Activated CD4-positive, alpha-beta T cell treated with anti-CD3 and anti-CD28 coated beads, Interleukin-2, amount 10 ng/mL, durations not matched to agents 24 days and 14 days (primary cell): ENCODE measurements at regions of chr7 and their contacts with region 1.

Region 1: GRCh38 chr7:24665564-24666294 is 91.5 kb downstream of the GSDME start:
- DNase-seq: peak; percentile 86
- H3K4me3 Mint-ChIP-seq: no peak overlapping the region
- H3K27ac Mint-ChIP-seq: no peak overlapping the region
- H3K4me1 Mint-ChIP-seq: peaks cover 1% of the 10 kb centered on the region
- H3K27me3 Mint-ChIP-seq: no peaks in the 10 kb centered on the region

Region 2: GRCh38 chr7:23570592-23571200 is 1095.0 kb before region 1 on chr7:
- intact Hi-C with region 1: loop called (anchors 2 kb)
- DNase-seq: peak; percentile 90
- H3K4me3 Mint-ChIP-seq: no peak overlapping the region
- H3K27ac Mint-ChIP-seq: no peak overlapping the region
- H3K4me1 Mint-ChIP-seq: no peaks in the 10 kb centered on the region
- H3K27me3 Mint-ChIP-seq: peaks cover 8% of the 10 kb centered on the region

Region 3: GRCh38 chr7:24290004-24290641 is 375.6 kb before region 1 on chr7:
- intact Hi-C with region 1: loop called (anchors 1 kb)
- DNase-seq: peak; percentile 82
- H3K4me3 Mint-ChIP-seq: no peak overlapping the region
- H3K27ac Mint-ChIP-seq: no peak overlapping the region
- H3K4me1 Mint-ChIP-seq: peaks cover 6% of the 10 kb centered on the region
- H3K27me3 Mint-ChIP-seq: peaks cover 42% of the 10 kb centered on the region

Region 4: DNA sequence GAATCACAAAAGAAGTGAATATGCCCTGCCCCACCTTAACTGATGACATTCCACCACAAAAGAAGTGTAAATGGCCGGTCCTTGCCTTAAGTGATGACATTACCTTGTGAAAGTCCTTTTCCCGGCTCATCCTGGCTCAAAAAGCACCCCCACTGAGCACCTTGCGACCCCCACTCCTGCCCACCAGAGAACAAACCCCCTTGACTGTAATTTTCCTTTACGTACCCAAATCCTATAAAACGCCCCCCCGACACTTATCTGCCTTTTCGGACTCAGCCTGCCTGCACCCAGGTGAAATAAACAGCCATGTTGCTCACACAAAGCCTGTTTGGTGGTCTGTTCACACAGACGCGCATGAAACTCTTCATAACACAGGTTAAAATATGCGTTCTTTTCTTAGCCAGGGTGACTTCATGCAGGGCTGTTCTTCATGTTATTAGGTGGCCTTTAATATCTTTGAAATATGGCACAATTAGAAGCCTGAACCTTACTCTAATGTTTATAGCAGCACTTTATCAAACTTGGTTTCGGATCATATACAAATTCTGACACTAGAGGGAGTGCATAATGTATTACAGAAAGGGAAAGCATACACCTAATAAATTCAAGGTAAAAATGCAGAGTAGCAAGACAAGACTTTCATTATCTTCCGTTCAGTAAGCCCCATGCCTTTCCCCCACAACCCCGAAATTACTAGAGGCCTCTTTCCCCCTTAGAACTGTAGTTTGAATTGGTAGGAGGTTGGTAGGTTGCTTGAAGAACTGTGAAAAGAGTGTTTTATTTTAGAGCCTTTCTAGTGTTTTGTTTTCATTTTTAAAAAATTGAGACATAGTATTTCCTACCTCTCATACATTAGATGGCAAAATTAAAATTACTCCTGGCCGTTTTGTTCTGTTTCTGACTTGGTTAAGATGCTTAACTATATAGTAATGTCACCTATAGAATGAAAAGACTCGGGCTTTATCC is 263.8 kb before region 1 on chr7:
- intact Hi-C with region 1: loop called (anchors 10 kb)
- DNase-seq: no peak
- H3K4me3 Mint-ChIP-seq: no peak overlapping the region
- H3K27ac Mint-ChIP-seq: no peak overlapping the region
- H3K4me1 Mint-ChIP-seq: peaks cover 2% of the 10 kb centered on the region
- H3K27me3 Mint-ChIP-seq: peaks cover 8% of the 10 kb centered on the region

Region 5: GRCh38 chr7:24609059-24609458 is 56.7 kb before region 1 on chr7:
- intact Hi-C with region 1: no loop called
- DNase-seq: no peak
- H3K4me3 Mint-ChIP-seq: no peak overlapping the region
- H3K27ac Mint-ChIP-seq: no peak overlapping the region
- H3K4me1 Mint-ChIP-seq: peaks cover 14% of the 10 kb centered on the region
- H3K27me3 Mint-ChIP-seq: no peaks in the 10 kb centered on the region

Region 6: DNA sequence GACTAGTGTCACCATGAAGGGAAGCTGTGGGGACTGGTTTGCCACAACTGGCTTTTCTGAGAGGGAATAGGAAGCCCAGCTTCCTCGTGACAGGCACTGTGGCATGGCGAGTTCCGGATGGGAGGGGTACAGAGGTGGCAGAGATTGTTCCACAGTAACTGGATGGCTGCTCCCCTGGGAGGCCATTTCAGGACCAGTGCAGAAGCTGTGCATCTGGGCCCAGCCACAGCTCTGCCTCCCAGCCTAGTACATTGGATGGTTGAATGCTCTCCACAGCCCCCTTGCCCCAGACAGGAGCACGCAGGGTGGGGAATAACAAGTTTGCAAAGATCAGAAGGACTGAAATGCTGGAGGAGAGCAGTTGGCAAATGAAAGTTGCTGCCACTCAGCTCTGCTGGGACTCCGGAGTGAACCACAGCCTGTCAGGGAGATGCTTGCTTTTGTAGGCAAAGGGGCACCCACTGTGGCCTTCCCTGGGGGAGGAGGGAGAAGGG is 39.8 kb after region 1 on chr7:
- intact Hi-C with region 1: no loop called
- DNase-seq: no peak
- H3K4me3 Mint-ChIP-seq: no peak overlapping the region
- H3K27ac Mint-ChIP-seq: no peak overlapping the region
- H3K4me1 Mint-ChIP-seq: peaks cover 7% of the 10 kb centered on the region
- H3K27me3 Mint-ChIP-seq: no peaks in the 10 kb centered on the region